ENCODE measurements at regions of chr4 and their contacts with region 1.

Region 1: GRCh38 chr4:147866532-147867271 is 134.8 kb downstream of the ARHGAP10 start:
- DNase-seq: peak; percentile 94
- H3K4me3 Mint-ChIP-seq: no peak overlapping the region
- H3K27ac Mint-ChIP-seq: no peak overlapping the region
- H3K4me1 Mint-ChIP-seq: peaks cover 7% of the 10 kb centered on the region
- H3K27me3 Mint-ChIP-seq: no peaks in the 10 kb centered on the region

Region 2: DNA sequence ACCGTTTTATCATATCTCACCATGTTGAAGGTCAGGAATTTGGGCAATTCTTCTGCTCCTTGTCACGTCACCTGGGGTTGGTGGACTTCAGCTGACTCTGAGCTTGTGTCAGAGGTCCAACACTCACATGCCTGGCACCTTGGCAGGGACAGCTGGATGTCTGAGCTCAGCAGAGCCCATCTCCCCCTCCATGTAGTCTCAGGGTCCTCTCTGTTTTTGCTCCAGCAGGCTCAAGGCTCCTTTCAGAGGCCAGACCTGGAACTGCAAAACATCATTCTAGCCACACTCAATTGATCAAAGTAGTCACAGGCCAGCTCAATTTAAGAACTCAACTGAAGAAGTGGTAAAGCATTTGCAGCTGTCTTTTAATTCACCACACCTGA is 340.4 kb before region 1 on chr4:
- CTCF ChIA-PET with region 1: interaction called, 10 read pairs
- POLR2A ChIA-PET with region 1: no interaction called
- intact Hi-C with region 1: no loop called
- DNase-seq: no peak
- H3K4me3 Mint-ChIP-seq: no peak overlapping the region
- H3K27ac Mint-ChIP-seq: no peak overlapping the region
- H3K4me1 Mint-ChIP-seq: no peaks in the 10 kb centered on the region
- H3K27me3 Mint-ChIP-seq: peaks cover 4% of the 10 kb centered on the region

Region 3: GRCh38 chr4:147629783-147630730 is 236.6 kb before region 1 on chr4:
- CTCF ChIA-PET with region 1: interaction called, 15 read pairs
- POLR2A ChIA-PET with region 1: no interaction called
- intact Hi-C with region 1: no loop called
- DNase-seq: no peak
- H3K4me3 Mint-ChIP-seq: no peak overlapping the region
- H3K27ac Mint-ChIP-seq: no peak overlapping the region
- H3K4me1 Mint-ChIP-seq: no peaks in the 10 kb centered on the region
- H3K27me3 Mint-ChIP-seq: no peaks in the 10 kb centered on the region

Region 4: DNA sequence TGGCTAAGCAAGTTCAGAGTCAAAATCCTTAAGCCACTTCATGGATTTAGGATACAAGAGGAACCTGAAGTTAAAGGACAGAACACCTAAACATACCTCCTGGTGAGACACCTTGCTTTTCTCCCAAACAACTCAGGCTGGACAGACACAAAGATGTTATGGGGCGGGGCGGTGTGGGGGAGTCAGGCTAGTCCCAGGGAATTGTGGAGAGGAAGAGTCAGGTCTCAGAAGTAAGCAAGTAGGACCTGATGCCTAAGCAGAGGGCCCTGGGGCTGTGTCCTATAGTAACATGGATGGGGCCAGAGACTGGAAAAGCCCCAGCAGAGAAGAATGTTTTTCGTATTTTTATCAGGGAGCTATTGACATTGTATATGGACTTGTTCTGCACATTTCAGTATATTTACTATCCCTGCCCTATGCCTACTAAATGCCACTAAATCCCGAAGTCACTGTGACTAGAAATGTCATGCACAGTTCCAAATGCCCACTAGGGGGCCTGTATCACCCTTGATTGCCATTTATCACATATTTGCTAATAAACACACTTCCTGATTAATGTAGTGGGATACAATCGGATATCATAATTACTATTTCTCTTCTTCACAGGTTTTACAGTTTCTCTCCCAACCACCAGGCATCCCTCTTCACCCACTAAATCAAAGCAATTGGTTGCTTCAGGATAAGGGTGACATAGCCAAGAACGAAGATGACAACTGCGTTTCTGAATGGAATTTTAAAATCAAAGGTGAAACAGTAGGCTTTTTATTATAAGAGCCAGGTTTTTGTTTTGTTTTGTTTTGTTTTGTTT is 158.6 kb before region 1 on chr4:
- CTCF ChIA-PET with region 1: interaction called, 224 read pairs
- POLR2A ChIA-PET with region 1: no interaction called
- intact Hi-C with region 1: loop called (anchors 1 kb)
- DNase-seq: peak; percentile 61
- H3K4me3 Mint-ChIP-seq: no peak overlapping the region
- H3K27ac Mint-ChIP-seq: no peak overlapping the region
- H3K4me1 Mint-ChIP-seq: no peaks in the 10 kb centered on the region
- H3K27me3 Mint-ChIP-seq: no peaks in the 10 kb centered on the region

Region 5: GRCh38 chr4:147793569-147794313 is 73.0 kb before region 1 on chr4:
- CTCF ChIA-PET with region 1: interaction called, 10 read pairs
- POLR2A ChIA-PET with region 1: no interaction called
- intact Hi-C with region 1: no loop called
- DNase-seq: peak; percentile 21
- H3K4me3 Mint-ChIP-seq: peak overlapping the region; percentile 16
- H3K27ac Mint-ChIP-seq: peak overlapping the region; percentile 50
- H3K4me1 Mint-ChIP-seq: peaks cover 37% of the 10 kb centered on the region
- H3K27me3 Mint-ChIP-seq: no peaks in the 10 kb centered on the region

Region 6: GRCh38 chr4:147855571-147856009 is 11.1 kb before region 1 on chr4:
- CTCF ChIA-PET with region 1: interaction called, 39 read pairs
- POLR2A ChIA-PET with region 1: no interaction called
- intact Hi-C with region 1: no loop called
- DNase-seq: no peak
- H3K4me3 Mint-ChIP-seq: no peak overlapping the region
- H3K27ac Mint-ChIP-seq: no peak overlapping the region
- H3K4me1 Mint-ChIP-seq: no peaks in the 10 kb centered on the region
- H3K27me3 Mint-ChIP-seq: no peaks in the 10 kb centered on the region

Measured in activated CD4-positive, alpha-beta memory T cell treated with anti-CD3 and anti-CD28 coated beads for 36 hours (primary cell).